Naive thymus-derived CD4-positive, alpha-beta T cell (primary cell): ENCODE measurements at regions of chr14 and their contacts with region 1.

Region 1: DNA sequence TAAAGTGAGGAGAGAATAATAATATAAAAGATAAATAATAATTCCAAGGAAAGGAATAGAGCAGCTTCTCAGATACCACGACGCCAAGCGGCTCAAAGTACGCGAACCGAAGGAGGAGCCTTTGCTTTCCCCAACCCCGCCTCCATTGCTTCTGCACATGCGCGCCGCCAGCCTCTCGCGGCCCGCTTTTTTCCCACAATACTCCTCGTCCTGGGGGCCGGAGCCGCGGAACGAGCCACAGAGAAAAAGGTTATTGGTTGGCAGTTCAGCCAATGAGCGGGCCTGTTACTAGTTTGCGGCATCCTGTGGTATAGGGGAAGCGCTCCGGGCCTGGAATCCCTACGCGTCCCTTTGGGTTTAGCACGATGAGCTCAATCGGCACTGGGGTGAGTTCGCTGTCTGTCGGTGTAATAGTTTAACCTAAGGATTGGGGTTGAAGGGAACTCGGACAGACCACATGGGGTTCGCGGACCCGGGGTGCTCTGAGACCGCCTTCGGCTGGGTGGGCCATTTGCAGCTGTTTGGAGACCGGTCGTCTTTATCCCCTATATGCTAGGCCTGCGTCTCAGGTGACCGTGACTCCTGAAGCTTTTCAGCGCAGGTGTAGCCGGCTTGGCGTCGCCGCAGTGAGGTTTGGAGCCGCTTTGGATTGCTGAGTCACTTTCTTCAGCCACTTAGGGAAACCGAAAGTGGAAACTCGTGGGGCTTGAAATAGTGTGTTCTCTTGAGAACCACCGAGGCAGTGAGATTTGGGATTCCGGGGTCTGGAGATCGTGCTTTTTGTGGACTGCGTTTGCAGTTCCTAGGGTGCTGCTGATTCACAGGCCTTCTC is at the start of gene PSMA3:
- DNase-seq: peak; percentile 95 to 98 (median 98)
- ATAC-seq: peak; percentile 96
- H3K4me3 ChIP-seq: peak within 1 kb of the TSS; percentile 100
- H3K4me3 Mint-ChIP-seq: peak within 1 kb of the TSS; percentile 89 to 99 (median 96)
- H3K27ac ChIP-seq: peak within 1 kb of the TSS; percentile 86
- H3K27ac Mint-ChIP-seq: peak within 1 kb of the TSS; percentile 97 to 99 (median 98)
- H3K4me1 ChIP-seq: peaks cover 23 to 26% of the 10 kb centered on the region in 2 donors
- H3K4me1 Mint-ChIP-seq: peaks cover 27 to 61% (median 52%) of the 10 kb centered on the region in 7 donors
- H3K27me3 ChIP-seq: no peaks in the 10 kb centered on the region
- H3K27me3 Mint-ChIP-seq: peaks cover 0 to 1% (median 0%) of the 10 kb centered on the region in 5 donors
- total RNA-seq, gene PSMA3: 76.5 to 357 (median 97.1) TPM

Region 2: DNA sequence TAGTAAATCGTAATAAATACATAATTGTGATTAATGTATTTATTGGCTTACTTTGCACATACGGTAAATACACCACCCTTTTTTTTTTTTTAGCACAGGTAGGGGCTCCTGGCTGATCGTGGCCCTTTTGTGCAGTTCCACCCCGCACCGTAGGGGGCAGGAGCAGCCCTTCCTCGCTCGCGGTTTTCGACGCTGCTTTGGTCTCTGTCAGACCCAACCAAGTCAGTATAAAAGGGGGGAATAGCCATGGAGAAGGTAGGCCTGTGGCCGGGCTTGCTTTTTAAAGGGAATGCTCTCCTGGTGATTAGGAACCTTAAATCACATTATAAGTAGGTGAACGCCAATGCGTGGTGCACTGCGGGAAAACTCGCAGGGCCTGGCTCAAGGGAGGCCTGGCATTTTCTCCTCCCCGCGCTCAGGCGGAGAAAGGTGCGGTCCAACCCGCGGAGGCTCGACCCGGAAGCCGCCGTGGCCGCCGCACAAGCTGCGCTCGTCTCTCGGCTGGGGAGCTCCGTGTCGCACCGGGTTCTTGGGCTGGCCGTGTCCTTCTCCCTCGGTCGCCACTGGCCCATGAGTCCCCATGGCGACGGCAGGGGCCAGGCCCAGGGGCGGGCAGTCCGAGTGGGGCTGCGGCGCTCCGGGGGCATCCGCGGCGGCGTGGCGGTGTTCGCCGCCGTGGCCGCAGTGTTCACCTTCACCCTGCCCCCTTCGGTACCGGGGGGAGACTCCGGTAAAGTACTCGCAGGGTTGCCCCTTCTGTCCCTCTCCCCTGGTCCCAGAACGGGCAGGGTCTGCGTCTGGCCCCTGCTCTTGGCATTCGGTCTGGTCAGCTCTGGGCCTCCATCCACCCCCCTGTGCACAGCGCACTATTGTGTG is 1665.2 kb before region 1 on chr14 and contains the start of gene TMEM260:
- CTCF ChIA-PET with region 1: no interaction called
- POLR2A ChIA-PET with region 1: no interaction called
- intact Hi-C with region 1: loop called in 1 of 2 experiments (anchors 5 kb)
- DNase-seq: peak; percentile 83 to 95 (median 92)
- ATAC-seq: peak; percentile 98
- H3K4me3 ChIP-seq: peak within 1 kb of the TSS; percentile 83
- H3K4me3 Mint-ChIP-seq: peak within 1 kb of the TSS; percentile 87 to 97 (median 95)
- H3K27ac ChIP-seq: peak within 1 kb of the TSS; percentile 88
- H3K27ac Mint-ChIP-seq: peak within 1 kb of the TSS; percentile 90 to 98 (median 96)
- H3K4me1 ChIP-seq: peaks cover 19 to 22% of the 10 kb centered on the region in 2 donors
- H3K4me1 Mint-ChIP-seq: peaks cover 33 to 45% (median 42%) of the 10 kb centered on the region in 7 donors
- H3K27me3 ChIP-seq: no peaks in the 10 kb centered on the region
- H3K27me3 Mint-ChIP-seq: no peaks in the 10 kb centered on the region
- total RNA-seq, gene TMEM260: 20.8 to 39.0 (median 27.4) TPM

Region 3: DNA sequence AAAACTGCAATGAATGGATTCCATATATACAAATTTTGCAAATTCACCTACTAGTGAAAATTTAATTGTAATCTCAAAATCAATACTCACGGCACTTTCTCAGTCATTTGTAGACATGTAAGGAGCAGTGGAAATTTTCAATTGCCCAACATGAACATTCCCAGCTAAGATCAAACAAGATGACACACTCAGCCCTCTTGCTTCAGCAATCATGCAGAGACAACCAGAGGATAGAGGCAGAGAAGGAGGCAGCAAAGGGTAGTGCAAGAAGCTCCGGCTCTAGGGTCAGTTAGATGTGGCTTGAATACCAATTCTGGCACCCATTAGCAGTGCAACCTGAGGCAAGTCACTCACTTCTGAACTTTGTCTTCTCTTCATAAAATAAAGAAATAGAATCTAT is 287.3 kb before region 1 on chr14:
- CTCF ChIA-PET with region 1: no interaction called
- POLR2A ChIA-PET with region 1: no interaction called
- intact Hi-C with region 1: no loop called
- DNase-seq: no peak
- ATAC-seq: no peak
- H3K4me3 ChIP-seq: no peak overlapping the region
- H3K4me3 Mint-ChIP-seq: no peak overlapping the region
- H3K27ac ChIP-seq: no peak overlapping the region
- H3K27ac Mint-ChIP-seq: no peak overlapping the region
- H3K4me1 ChIP-seq: no peaks in the 10 kb centered on the region
- H3K4me1 Mint-ChIP-seq: no peaks in the 10 kb centered on the region
- H3K27me3 ChIP-seq: no peaks in the 10 kb centered on the region
- H3K27me3 Mint-ChIP-seq: peaks cover 0 to 33% (median 19%) of the 10 kb centered on the region in 5 donors

Region 4: GRCh38 chr14:58107947-58108552 is 136.7 kb before region 1 on chr14:
- CTCF ChIA-PET with region 1: no interaction called
- POLR2A ChIA-PET with region 1: no interaction called
- intact Hi-C with region 1: loop called in 1 of 2 experiments (anchors 1 kb)
- DNase-seq: peak in 7 of 9 donors; percentile 23 to 55 (median 29)
- ATAC-seq: peak; percentile 45
- H3K4me3 ChIP-seq: no peak overlapping the region
- H3K4me3 Mint-ChIP-seq: no peak overlapping the region
- H3K27ac ChIP-seq: no peak overlapping the region
- H3K27ac Mint-ChIP-seq: no peak overlapping the region
- H3K4me1 ChIP-seq: no peaks in the 10 kb centered on the region
- H3K4me1 Mint-ChIP-seq: no peaks in the 10 kb centered on the region
- H3K27me3 ChIP-seq: peaks cover 0 to 2% of the 10 kb centered on the region in 2 donors
- H3K27me3 Mint-ChIP-seq: peaks cover 4 to 44% (median 15%) of the 10 kb centered on the region in 5 donors

Region 5: DNA sequence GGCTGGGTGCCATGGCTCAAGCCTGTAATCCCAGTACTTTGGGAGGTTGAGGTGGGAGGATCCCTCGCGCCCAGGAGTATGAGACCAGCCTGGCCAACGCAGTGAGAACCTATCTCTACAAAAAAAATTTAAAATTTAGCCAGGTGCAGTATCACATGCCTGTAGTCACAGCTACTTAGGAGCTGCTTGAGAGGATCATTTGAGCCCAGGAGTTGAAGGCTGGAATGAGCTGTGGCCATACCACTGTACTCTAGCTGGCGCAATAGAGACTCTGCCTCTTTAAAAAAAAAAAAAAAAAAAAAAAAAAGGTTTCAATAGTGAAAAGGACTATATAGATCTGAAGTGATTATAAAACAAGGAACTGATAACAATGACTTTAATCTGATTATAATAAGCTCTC is 13.4 kb after region 1 on chr14:
- CTCF ChIA-PET with region 1: no interaction called
- POLR2A ChIA-PET with region 1: interaction called, 11 read pairs
- intact Hi-C with region 1: no loop called
- DNase-seq: no peak
- ATAC-seq: no peak
- H3K4me3 ChIP-seq: no peak overlapping the region
- H3K4me3 Mint-ChIP-seq: no peak overlapping the region
- H3K27ac ChIP-seq: no peak overlapping the region
- H3K27ac Mint-ChIP-seq: peak overlapping the region in 1 of 9 donors; percentile 71
- H3K4me1 ChIP-seq: peaks cover 0 to 2% of the 10 kb centered on the region in 2 donors
- H3K4me1 Mint-ChIP-seq: peaks cover 8 to 23% (median 16%) of the 10 kb centered on the region in 7 donors
- H3K27me3 ChIP-seq: no peaks in the 10 kb centered on the region
- H3K27me3 Mint-ChIP-seq: no peaks in the 10 kb centered on the region

Region 6: GRCh38 chr14:58331111-58331510 is 86.3 kb after region 1 on chr14:
- CTCF ChIA-PET with region 1: no interaction called
- POLR2A ChIA-PET with region 1: no interaction called
- intact Hi-C with region 1: loop called (anchors 1 kb)
- DNase-seq: peak; percentile 61 to 98 (median 95)
- ATAC-seq: peak; percentile 97
- H3K4me3 ChIP-seq: peak overlapping the region; percentile 17
- H3K4me3 Mint-ChIP-seq: peak overlapping the region; percentile 38 to 85 (median 76)
- H3K27ac ChIP-seq: peak overlapping the region; percentile 72
- H3K27ac Mint-ChIP-seq: peak overlapping the region; percentile 84 to 97 (median 94)
- H3K4me1 ChIP-seq: peaks cover 5 to 9% of the 10 kb centered on the region in 2 donors
- H3K4me1 Mint-ChIP-seq: peaks cover 17 to 42% (median 32%) of the 10 kb centered on the region in 7 donors
- H3K27me3 ChIP-seq: no peaks in the 10 kb centered on the region
- H3K27me3 Mint-ChIP-seq: no peaks in the 10 kb centered on the region

Region 7: GRCh38 chr14:58637391-58638230 is 392.8 kb after region 1 on chr14 and contains the start of gene DACT1:
- CTCF ChIA-PET with region 1: no interaction called
- POLR2A ChIA-PET with region 1: interaction called, 6 read pairs
- intact Hi-C with region 1: loop called in 1 of 2 experiments (anchors 5 kb)
- DNase-seq: peak; percentile 45 to 74 (median 64)
- ATAC-seq: peak; percentile 80
- H3K4me3 ChIP-seq: peak within 1 kb of the TSS; percentile 80
- H3K4me3 Mint-ChIP-seq: peak within 1 kb of the TSS; percentile 89 to 99 (median 98)
- H3K27ac ChIP-seq: peak within 1 kb of the TSS; percentile 61
- H3K27ac Mint-ChIP-seq: peak within 1 kb of the TSS; percentile 84 to 95 (median 91)
- H3K4me1 ChIP-seq: peaks cover 0 to 22% of the 10 kb centered on the region in 2 donors
- H3K4me1 Mint-ChIP-seq: peaks cover 20 to 61% (median 45%) of the 10 kb centered on the region in 7 donors
- H3K27me3 ChIP-seq: no peaks in the 10 kb centered on the region
- H3K27me3 Mint-ChIP-seq: peaks cover 0 to 44% (median 6%) of the 10 kb centered on the region in 5 donors
- total RNA-seq, gene DACT1: 8.2 to 32.3 (median 15.0) TPM